ENCODE measurements at regions of chr2 and their contacts with region 1.

Region 1: DNA sequence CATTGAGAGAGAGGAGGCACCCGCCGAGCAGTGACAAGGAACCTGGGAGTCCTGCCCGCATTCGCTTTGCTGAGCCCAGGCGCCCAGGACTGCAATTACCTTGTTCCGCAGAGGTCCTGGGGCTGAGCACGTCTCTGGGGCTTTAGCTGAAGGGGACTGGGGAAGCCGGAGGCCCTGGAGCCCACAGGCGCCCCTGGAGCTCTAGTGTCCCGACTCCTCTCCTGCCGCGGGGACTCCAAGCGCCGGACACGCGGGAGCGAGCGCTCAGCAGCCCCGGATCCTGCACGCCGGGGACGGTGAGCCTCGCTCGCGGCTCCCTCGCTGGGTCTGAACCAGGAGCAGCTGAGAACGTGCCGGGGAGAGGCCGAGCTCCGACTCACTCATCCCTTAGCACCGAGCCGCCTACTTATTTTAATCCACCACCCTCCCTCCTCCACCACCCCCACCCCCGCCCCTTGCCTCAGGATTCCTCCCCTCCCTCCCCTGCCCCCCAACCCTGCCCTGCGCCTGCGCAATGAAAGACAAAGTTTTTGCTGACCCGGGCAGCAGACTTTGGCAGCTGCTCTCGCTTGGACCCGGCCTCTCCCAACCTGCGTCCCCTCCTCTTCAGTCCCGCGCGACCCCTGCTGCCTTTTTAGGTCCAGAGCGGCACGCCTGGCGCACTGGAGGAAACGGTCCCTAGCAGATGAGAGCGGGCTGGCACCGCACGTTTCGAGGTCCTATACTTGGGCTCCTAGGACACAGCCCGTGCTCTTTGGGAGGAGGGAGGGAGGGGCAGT is at the start of gene OSR1:
- DNase-seq: peak; percentile 53
- ATAC-seq: no peak
- H3K4me3 Mint-ChIP-seq: peak within 1 kb of the TSS; percentile 49
- H3K27ac Mint-ChIP-seq: no peak within 1 kb of the TSS
- H3K4me1 Mint-ChIP-seq: peaks cover 27% of the 10 kb centered on the region
- H3K27me3 Mint-ChIP-seq: peaks cover 97% of the 10 kb centered on the region
- total RNA-seq, gene OSR1: not detected

Region 2: DNA sequence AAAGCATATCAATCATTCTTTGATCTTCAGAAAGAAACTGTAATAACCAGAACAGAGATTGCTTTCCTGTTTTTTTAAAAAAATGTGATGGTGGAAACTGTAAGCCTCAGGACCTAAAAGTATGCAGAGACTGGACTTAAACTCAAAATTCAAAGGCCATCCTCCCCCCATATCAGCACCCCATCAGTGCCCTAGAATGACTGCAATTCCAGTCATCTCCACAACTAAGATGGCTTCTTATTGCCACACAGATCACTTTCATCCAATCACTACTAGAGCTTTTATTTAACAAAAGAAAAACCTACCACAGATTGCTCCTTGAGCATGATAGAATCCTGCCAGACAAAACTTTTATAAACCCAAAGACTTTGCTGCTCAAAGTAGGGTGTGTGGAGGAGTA is 91.6 kb before region 1 on chr2:
- POLR2A ChIA-PET with region 1: no interaction called
- DNase-seq: no peak
- ATAC-seq: no peak
- H3K4me3 Mint-ChIP-seq: no peak overlapping the region
- H3K27ac Mint-ChIP-seq: no peak overlapping the region
- H3K4me1 Mint-ChIP-seq: no peaks in the 10 kb centered on the region
- H3K27me3 Mint-ChIP-seq: no peaks in the 10 kb centered on the region

Region 3: GRCh38 chr2:19347619-19348562 is 10.5 kb before region 1 on chr2:
- POLR2A ChIA-PET with region 1: interaction called, 20 read pairs
- DNase-seq: peak; percentile 100
- ATAC-seq: peak; percentile 92
- H3K4me3 Mint-ChIP-seq: peak overlapping the region; percentile 96
- H3K27ac Mint-ChIP-seq: peak overlapping the region; percentile 97
- H3K4me1 Mint-ChIP-seq: peaks cover 21% of the 10 kb centered on the region
- H3K27me3 Mint-ChIP-seq: peaks cover 34% of the 10 kb centered on the region

Measured in activated naive CD8-positive, alpha-beta T cell treated with anti-CD3 and anti-CD28 coated beads, Interleukin-2, amount 10 ng/mL, durations not matched to agents 7 days and 5 days (primary cell).